A549 (cell line): ENCODE measurements at regions of chr9 and their contacts with region 1.

Region 1: GRCh38 chr9:120619751-120620655 is 40.0 kb upstream of the CDK5RAP2 start:
- DNase-seq: peak; percentile 76 to 77
- ATAC-seq: peak; percentile 91 to 95
- H3K4me3 ChIP-seq: no peak overlapping the region
- H3K27ac ChIP-seq: peak overlapping the region; percentile 62 to 67
- H3K4me1 ChIP-seq: peaks cover 80% of the 10 kb centered on the region
- CTCF ChIP-seq: peak; percentile 96
- EP300 ChIP-seq: no peak
- POLR2A ChIP-seq: no peak
- RAD21 ChIP-seq: peak; percentile 95 to 96

Region 2: GRCh38 chr9:120730661-120731514 is 110.9 kb after region 1 on chr9:
- CTCF ChIA-PET with region 1: interaction called, 13 read pairs
- POLR2A ChIA-PET with region 1: no interaction called
- DNase-seq: no peak
- ATAC-seq: peak; percentile 30 to 35; a peak in 3 of 6 replicates
- H3K4me3 ChIP-seq: no peak overlapping the region
- H3K27ac ChIP-seq: peak overlapping the region; percentile 5 to 11; a peak in 2 of 6 replicates
- H3K4me1 ChIP-seq: peaks cover 23% of the 10 kb centered on the region
- CTCF ChIP-seq: no peak
- EP300 ChIP-seq: no peak
- POLR2A ChIP-seq: no peak
- RAD21 ChIP-seq: no peak

Region 3: DNA sequence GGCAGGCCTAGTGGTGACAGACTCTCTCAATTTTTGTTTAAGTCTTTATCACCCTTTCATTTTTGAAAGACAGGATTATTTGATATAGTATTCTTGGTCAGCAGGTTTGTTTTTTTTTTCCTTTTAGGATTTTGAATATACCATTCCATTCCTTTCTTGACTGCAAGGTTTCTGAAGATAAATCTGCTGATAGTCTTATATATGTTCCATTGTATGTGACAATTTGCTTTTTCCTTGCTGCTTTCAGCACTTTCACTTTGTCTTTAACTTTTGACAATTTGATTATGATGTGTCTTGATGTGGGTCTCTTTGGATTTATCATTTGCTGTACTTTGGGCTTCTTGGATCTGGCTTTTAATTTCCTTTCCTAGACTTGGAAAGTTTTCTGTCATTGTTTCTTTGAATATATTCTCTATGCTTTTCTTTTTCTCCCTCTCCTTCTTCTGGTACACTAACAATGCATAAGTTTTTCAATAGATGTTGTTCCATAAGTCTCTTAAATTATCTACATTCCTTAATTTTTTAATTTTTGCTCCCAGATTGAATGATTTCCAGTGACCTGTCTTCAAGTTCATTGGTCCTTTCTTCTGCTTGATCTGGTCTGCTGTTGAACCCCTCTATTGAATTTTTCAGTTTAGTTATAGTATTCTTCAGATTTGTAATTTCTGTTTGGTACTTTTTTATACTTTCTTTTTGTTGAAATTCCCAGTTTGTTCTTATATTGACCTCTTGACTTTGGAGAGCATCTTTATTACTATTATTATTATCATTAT is 187.8 kb after region 1 on chr9:
- CTCF ChIA-PET with region 1: no interaction called
- POLR2A ChIA-PET with region 1: interaction called, 10 read pairs
- DNase-seq: no peak
- ATAC-seq: no peak
- H3K4me3 ChIP-seq: no peak overlapping the region
- H3K27ac ChIP-seq: no peak overlapping the region
- H3K4me1 ChIP-seq: no peaks in the 10 kb centered on the region
- CTCF ChIP-seq: no peak
- EP300 ChIP-seq: no peak
- POLR2A ChIP-seq: no peak
- RAD21 ChIP-seq: no peak